ENCODE measurements at regions of chr10 and their contacts with region 1.

Region 1: DNA sequence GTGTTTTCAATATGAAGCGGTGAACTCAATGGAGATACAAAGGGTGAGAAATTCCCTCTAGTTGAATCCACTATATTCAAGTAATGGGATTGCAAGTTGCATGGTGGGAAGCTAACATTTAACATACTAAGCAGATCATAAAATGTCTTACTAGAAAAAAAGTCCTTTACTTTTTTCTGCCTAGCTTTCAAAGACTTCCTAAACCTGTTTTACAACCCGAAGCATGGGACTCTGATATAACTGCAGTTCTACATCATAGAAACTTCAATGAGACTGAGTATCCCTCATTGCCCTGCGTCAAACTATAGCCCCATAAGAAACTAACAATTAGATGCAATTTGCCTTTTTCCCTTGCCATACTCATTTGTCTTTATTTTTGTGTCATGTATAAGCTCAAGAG is 179.9 kb downstream of the RTKN2 start:
- DNase-seq: peak in 1 of 2 experiments; percentile 24
- H3K4me3 ChIP-seq: no peak overlapping the region
- H3K27ac ChIP-seq: no peak overlapping the region
- H3K4me1 ChIP-seq: peaks cover 33% of the 10 kb centered on the region
- H3K27me3 ChIP-seq: no peaks in the 10 kb centered on the region
- CTCF ChIP-seq: no peak

Region 2: GRCh38 chr10:61744469-61744868 is 344.3 kb before region 1 on chr10:
- CTCF ChIA-PET with region 1: interaction called, 10 read pairs
- POLR2A ChIA-PET with region 1: no interaction called
- intact Hi-C with region 1: no loop called
- DNase-seq: no peak
- H3K4me3 ChIP-seq: no peak overlapping the region
- H3K27ac ChIP-seq: no peak overlapping the region
- H3K4me1 ChIP-seq: no peaks in the 10 kb centered on the region; the same call in 1 of the 2 replicates
- H3K27me3 ChIP-seq: no peaks in the 10 kb centered on the region
- CTCF ChIP-seq: peak; percentile 44; the same call in 1 of the 2 replicates

Region 3: GRCh38 chr10:62244780-62245467 is 156.1 kb after region 1 on chr10:
- CTCF ChIA-PET with region 1: no interaction called
- POLR2A ChIA-PET with region 1: no interaction called
- intact Hi-C with region 1: no loop called
- DNase-seq: peak; percentile 37 to 58
- H3K4me3 ChIP-seq: no peak overlapping the region
- H3K27ac ChIP-seq: no peak overlapping the region
- H3K4me1 ChIP-seq: peaks cover 35% of the 10 kb centered on the region
- H3K27me3 ChIP-seq: no peaks in the 10 kb centered on the region
- CTCF ChIP-seq: peak; percentile 88